ENCODE measurements at regions of chr14 and their contacts with region 1.

Region 1: DNA sequence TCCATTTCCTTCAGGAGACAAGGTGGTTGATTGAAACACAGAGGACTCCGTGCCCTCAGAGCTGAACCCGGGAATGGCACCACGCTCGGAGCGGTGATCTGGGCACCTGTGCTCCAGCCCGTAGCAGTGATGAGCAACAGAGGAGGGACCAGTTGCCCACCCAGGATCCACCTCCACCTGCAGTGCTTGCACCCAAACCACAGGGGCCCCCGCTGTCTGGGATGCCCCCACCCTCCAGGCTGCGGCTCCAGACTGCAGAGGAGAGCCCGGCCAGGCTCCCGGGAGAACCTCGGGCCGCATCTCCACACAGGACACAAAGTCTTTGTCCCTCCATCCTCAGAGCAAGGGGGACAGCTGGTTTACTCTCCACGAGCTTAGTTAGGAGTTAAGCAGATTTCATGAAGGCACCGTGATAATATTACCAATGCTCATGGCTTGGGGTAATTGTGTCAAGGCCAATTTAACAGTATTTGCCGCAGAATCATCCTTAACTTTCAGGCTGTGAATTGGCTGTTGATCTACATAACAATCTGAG is 100.6 kb downstream of the TNFAIP2 start:
- DNase-seq: no peak
- ATAC-seq: no peak
- H3K4me3 ChIP-seq: no peak overlapping the region
- H3K27ac ChIP-seq: no peak overlapping the region
- H3K4me1 ChIP-seq: no peaks in the 10 kb centered on the region
- H3K27me3 ChIP-seq: peaks cover 56% of the 10 kb centered on the region
- CTCF ChIP-seq: no peak
- POLR2A ChIP-seq: no peak
- RAD21 ChIP-seq: no peak

Region 2: GRCh38 chr14:103243764-103244737 is 20.2 kb after region 1 on chr14:
- CTCF ChIA-PET with region 1: no interaction called
- POLR2A ChIA-PET with region 1: interaction called, 16 read pairs
- dilution Hi-C with region 1: no loop called
- in situ Hi-C with region 1: no loop called
- intact Hi-C with region 1: no loop called
- DNase-seq: no peak
- ATAC-seq: no peak
- H3K4me3 ChIP-seq: no peak overlapping the region
- H3K27ac ChIP-seq: no peak overlapping the region
- H3K4me1 ChIP-seq: peaks cover 6% of the 10 kb centered on the region
- H3K27me3 ChIP-seq: peaks cover 8% of the 10 kb centered on the region
- CTCF ChIP-seq: no peak
- POLR2A ChIP-seq: no peak
- RAD21 ChIP-seq: no peak